Mammary epithelial cell (primary cell): ENCODE measurements at regions of chr1 and their contacts with region 1.

Region 1: GRCh38 chr1:112188611-112189010 is 199.1 kb upstream of the KCND3 start:
- DNase-seq: no peak
- H3K4me3 ChIP-seq: no peak overlapping the region
- H3K27ac ChIP-seq: no peak overlapping the region
- H3K4me1 ChIP-seq: no peaks in the 10 kb centered on the region
- H3K27me3 ChIP-seq: no peaks in the 10 kb centered on the region
- CTCF ChIP-seq: no peak

Region 2: GRCh38 chr1:112144733-112145426 is 43.7 kb before region 1 on chr1:
- CTCF ChIA-PET with region 1: no interaction called
- dilution Hi-C with region 1: loop called (anchors 5 kb)
- in situ Hi-C with region 1: no loop called
- intact Hi-C with region 1: no loop called
- DNase-seq: no peak
- H3K4me3 ChIP-seq: no peak overlapping the region
- H3K27ac ChIP-seq: no peak overlapping the region
- H3K4me1 ChIP-seq: no peaks in the 10 kb centered on the region
- H3K27me3 ChIP-seq: peaks cover 5% of the 10 kb centered on the region
- CTCF ChIP-seq: no peak

Region 3: DNA sequence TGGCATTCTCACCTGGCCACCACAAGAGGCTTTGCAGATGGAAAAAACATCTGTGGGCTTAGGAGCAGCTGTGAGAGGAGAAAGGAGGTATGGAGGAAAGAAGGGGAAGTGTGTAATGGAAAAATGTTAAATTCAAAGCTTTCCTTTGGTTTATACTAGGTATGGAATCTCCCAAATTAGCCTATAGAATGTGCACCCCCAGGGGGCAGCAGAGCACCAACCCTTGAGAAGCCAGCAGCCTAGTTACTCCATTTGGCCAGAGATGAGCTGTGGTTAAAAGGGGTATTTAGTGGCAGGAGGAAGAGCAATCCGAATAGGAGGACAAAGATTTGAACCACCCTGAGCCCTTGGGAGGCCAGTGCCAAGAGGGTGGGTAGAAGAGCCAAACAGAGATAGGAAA is 109.9 kb after region 1 on chr1:
- CTCF ChIA-PET with region 1: interaction called, 13 read pairs
- dilution Hi-C with region 1: no loop called
- in situ Hi-C with region 1: no loop called
- intact Hi-C with region 1: no loop called
- DNase-seq: peak; percentile 58
- H3K4me3 ChIP-seq: no peak overlapping the region
- H3K27ac ChIP-seq: no peak overlapping the region
- H3K4me1 ChIP-seq: peaks cover 10% of the 10 kb centered on the region
- H3K27me3 ChIP-seq: no peaks in the 10 kb centered on the region
- CTCF ChIP-seq: peak; percentile 86 to 89